CD4-positive, alpha-beta memory T cell (primary cell): ENCODE measurements at regions of chr9 and their contacts with region 1.

Region 1: GRCh38 chr9:96418074-96418809 is at the start of gene ZNF367:
- DNase-seq: peak; percentile 90 to 92 (median 92)
- H3K4me3 ChIP-seq: peak within 1 kb of the TSS; percentile 86 to 89
- H3K4me3 Mint-ChIP-seq: peak within 1 kb of the TSS; percentile 90 to 98 (median 92)
- H3K27ac ChIP-seq: peak within 1 kb of the TSS; percentile 81
- H3K27ac Mint-ChIP-seq: peak within 1 kb of the TSS; percentile 92 to 99 (median 97)
- H3K4me1 ChIP-seq: peaks cover 49% of the 10 kb centered on the region
- H3K4me1 Mint-ChIP-seq: peaks cover 24 to 49% (median 32%) of the 10 kb centered on the region in 4 donors
- H3K27me3 ChIP-seq: no peaks in the 10 kb centered on the region
- H3K27me3 Mint-ChIP-seq: no peaks in the 10 kb centered on the region
- total RNA-seq, gene ZNF367: 5.1 to 5.4 TPM

Region 2: GRCh38 chr9:94726495-94727191 is 1691.6 kb before region 1 on chr9 and contains the start of gene AOPEP:
- CTCF ChIA-PET with region 1: no interaction called
- POLR2A ChIA-PET with region 1: no interaction called
- intact Hi-C with region 1: loop called (anchors 5 kb)
- DNase-seq: peak; percentile 97 to 99 (median 99)
- H3K4me3 ChIP-seq: peak within 1 kb of the TSS; percentile 84 to 98
- H3K4me3 Mint-ChIP-seq: peak within 1 kb of the TSS; percentile 96 to 99 (median 98)
- H3K27ac ChIP-seq: peak within 1 kb of the TSS; percentile 63
- H3K27ac Mint-ChIP-seq: peak within 1 kb of the TSS; percentile 94 to 100 (median 99)
- H3K4me1 ChIP-seq: peaks cover 13% of the 10 kb centered on the region
- H3K4me1 Mint-ChIP-seq: peaks cover 12 to 24% (median 17%) of the 10 kb centered on the region in 4 donors
- H3K27me3 ChIP-seq: no peaks in the 10 kb centered on the region
- H3K27me3 Mint-ChIP-seq: no peaks in the 10 kb centered on the region
- total RNA-seq, gene AOPEP: 11.6 to 11.7 TPM

Region 3: GRCh38 chr9:96327694-96328352 is 90.4 kb before region 1 on chr9:
- CTCF ChIA-PET with region 1: interaction called, 9 read pairs
- POLR2A ChIA-PET with region 1: interaction called, 5 read pairs
- intact Hi-C with region 1: loop called (anchors 1 kb)
- DNase-seq: peak; percentile 46 to 66 (median 54)
- H3K4me3 ChIP-seq: no peak overlapping the region
- H3K4me3 Mint-ChIP-seq: no peak overlapping the region
- H3K27ac ChIP-seq: no peak overlapping the region
- H3K27ac Mint-ChIP-seq: peak overlapping the region in 1 of 7 donors; percentile 29
- H3K4me1 ChIP-seq: no peaks in the 10 kb centered on the region
- H3K4me1 Mint-ChIP-seq: no peaks in the 10 kb centered on the region
- H3K27me3 ChIP-seq: no peaks in the 10 kb centered on the region
- H3K27me3 Mint-ChIP-seq: no peaks in the 10 kb centered on the region

Region 4: DNA sequence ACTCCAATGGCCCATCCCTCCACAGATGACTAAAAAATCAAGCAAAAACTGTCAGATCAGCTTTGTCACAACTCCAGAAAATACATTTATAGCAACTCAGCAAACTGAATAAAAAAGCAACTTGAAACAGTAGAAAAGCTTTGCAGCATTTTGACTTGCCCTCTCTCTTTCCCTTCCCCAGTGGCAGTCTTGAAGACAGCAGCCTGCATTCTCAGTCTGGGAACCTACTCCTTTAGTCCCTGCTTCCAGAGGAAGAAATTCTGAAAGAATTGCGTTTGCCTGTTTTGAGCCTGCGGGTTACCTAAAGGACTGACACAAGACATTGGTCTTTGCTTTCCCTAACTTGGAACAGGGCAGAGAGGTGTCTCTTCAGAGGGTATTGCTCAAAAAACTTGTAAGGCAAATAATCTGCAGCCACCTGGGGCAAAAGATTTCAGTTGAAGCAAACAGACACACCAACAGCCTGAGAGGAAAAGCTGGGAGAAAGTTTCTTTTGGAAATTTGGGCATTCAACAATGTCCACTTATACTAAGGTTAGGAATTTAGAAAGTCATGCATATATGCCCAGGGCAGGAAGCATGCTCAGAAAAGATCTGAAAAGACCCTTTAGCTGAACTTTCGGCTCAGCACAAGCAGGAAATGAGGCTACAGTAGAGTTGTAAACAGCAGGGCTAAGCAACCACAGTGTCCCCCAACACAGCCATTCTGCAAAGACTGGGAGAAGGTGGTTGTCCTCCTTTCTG is 19.5 kb before region 1 on chr9:
- CTCF ChIA-PET with region 1: interaction called, 22 read pairs
- POLR2A ChIA-PET with region 1: interaction called, 47 read pairs
- intact Hi-C with region 1: loop called (anchors 2 kb)
- DNase-seq: peak in 2 of 5 donors; percentile 12 to 15
- H3K4me3 ChIP-seq: no peak overlapping the region
- H3K4me3 Mint-ChIP-seq: peak overlapping the region; percentile 48 to 81 (median 56)
- H3K27ac ChIP-seq: peak overlapping the region; percentile 43
- H3K27ac Mint-ChIP-seq: peak overlapping the region; percentile 74 to 96 (median 82)
- H3K4me1 ChIP-seq: peaks cover 28% of the 10 kb centered on the region
- H3K4me1 Mint-ChIP-seq: peaks cover 20 to 27% (median 23%) of the 10 kb centered on the region in 4 donors
- H3K27me3 ChIP-seq: no peaks in the 10 kb centered on the region
- H3K27me3 Mint-ChIP-seq: no peaks in the 10 kb centered on the region

Region 5: DNA sequence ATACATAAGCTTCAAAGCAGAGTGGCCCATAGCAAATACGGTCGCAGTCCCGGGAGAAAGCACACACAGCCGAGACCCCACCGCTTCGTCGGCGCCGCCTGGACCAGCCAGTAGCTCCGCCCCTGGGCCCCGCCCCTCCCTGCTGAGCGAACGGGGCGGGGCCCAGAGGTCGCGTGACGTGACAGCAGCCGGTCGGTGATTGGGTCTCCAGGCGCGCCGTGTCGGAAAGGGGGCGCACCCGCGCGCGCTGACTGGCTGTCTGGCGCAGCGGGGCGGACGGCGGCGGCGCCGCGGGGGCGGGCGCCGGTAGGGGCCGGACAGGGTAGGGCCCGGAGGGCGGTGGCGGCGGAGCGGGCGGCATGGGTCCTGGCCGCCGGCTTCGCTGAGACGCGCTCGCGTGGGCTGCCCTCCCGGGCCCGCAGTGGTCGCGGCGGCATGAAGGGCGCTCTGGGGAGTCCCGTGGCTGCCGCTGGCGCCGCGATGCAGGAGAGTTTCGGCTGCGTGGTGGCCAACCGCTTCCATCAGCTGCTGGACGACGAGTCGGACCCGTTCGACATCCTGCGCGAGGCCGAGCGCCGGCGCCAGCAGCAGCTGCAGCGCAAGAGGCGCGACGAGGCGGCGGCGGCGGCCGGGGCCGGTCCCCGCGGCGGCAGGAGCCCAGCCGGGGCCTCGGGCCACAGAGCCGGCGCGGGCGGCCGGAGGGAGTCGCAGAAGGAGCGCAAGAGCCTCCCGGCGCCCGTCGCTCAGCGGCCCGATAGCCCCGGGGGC is 31.8 kb after region 1 on chr9 and contains the start of gene HABP4:
- CTCF ChIA-PET with region 1: interaction called, 7 read pairs
- POLR2A ChIA-PET with region 1: interaction called, 123 read pairs
- intact Hi-C with region 1: loop called (anchors 1 kb)
- DNase-seq: peak; percentile 93 to 94 (median 94)
- H3K4me3 ChIP-seq: peak within 1 kb of the TSS; percentile 48 to 72
- H3K4me3 Mint-ChIP-seq: peak within 1 kb of the TSS; percentile 91 to 96 (median 96)
- H3K27ac ChIP-seq: peak within 1 kb of the TSS; percentile 59
- H3K27ac Mint-ChIP-seq: peak within 1 kb of the TSS; percentile 82 to 98 (median 94)
- H3K4me1 ChIP-seq: peaks cover 23% of the 10 kb centered on the region
- H3K4me1 Mint-ChIP-seq: peaks cover 16 to 32% (median 21%) of the 10 kb centered on the region in 4 donors
- H3K27me3 ChIP-seq: no peaks in the 10 kb centered on the region
- H3K27me3 Mint-ChIP-seq: no peaks in the 10 kb centered on the region
- total RNA-seq, gene HABP4: 35.5 to 36.6 TPM

Region 6: GRCh38 chr9:96619491-96620154 is 201.4 kb after region 1 on chr9 and contains the start of gene CDC14B:
- CTCF ChIA-PET with region 1: no interaction called
- POLR2A ChIA-PET with region 1: no interaction called
- intact Hi-C with region 1: loop called (anchors 2 kb)
- DNase-seq: peak; percentile 51 to 77 (median 62)
- H3K4me3 ChIP-seq: peak within 1 kb of the TSS in 1 of 2 donors; percentile 38
- H3K4me3 Mint-ChIP-seq: peak within 1 kb of the TSS; percentile 62 to 83 (median 80)
- H3K27ac ChIP-seq: no peak within 1 kb of the TSS
- H3K27ac Mint-ChIP-seq: peak within 1 kb of the TSS in 4 of 7 donors; percentile 37 to 63 (median 44)
- H3K4me1 ChIP-seq: peaks cover 9% of the 10 kb centered on the region
- H3K4me1 Mint-ChIP-seq: peaks cover 4 to 6% (median 6%) of the 10 kb centered on the region in 4 donors
- H3K27me3 ChIP-seq: peaks cover 8% of the 10 kb centered on the region
- H3K27me3 Mint-ChIP-seq: peaks cover 20 to 31% of the 10 kb centered on the region in 2 donors
- total RNA-seq, gene CDC14B: 15.8 to 17.1 TPM

Region 7: DNA sequence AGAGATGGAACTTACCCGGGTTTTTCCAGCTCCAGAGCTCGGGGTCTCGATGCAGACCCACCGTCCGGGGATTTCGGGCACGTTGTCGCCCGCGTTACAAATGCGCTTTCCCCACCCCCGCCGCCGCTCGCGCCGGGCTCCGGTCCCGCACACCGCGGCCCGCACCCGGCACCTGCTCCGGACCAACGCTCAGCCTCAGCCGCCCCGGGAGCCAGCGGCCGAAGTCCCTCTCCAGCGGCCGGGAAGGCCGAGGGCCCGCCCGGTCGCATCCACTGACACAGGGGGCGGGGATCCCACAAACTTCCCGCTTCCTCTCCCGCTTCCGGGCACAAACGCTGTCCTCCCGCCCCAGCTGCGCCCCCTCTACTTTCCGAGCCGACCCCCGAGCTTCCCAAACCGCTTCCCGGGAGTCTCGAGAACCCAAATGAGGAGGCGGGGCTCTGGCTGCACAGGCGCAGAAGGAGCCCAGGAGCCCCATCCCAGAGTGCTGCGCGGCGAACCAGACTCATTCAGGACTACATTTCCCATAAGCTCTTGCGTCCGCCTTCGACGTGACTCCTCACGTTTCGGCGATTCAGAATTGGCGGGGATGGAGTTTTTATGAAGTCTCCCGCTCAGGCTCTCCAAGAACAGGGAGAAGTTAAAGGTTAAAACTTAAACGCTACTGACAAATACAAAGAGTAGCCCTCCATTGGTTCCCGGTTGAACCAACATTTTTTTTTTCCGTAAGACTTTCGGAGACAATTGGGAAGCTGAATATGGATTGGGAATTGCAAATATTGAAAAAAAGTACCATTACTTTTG is 436.0 kb after region 1 on chr9 and contains the start of gene ZNF782:
- CTCF ChIA-PET with region 1: no interaction called
- POLR2A ChIA-PET with region 1: no interaction called
- intact Hi-C with region 1: loop called (anchors 10 kb)
- DNase-seq: peak; percentile 80 to 84 (median 81)
- H3K4me3 ChIP-seq: peak within 1 kb of the TSS; percentile 4 to 84
- H3K4me3 Mint-ChIP-seq: peak within 1 kb of the TSS; percentile 100
- H3K27ac ChIP-seq: peak within 1 kb of the TSS; percentile 73
- H3K27ac Mint-ChIP-seq: peak within 1 kb of the TSS; percentile 86 to 100 (median 99)
- H3K4me1 ChIP-seq: peaks cover 32% of the 10 kb centered on the region
- H3K4me1 Mint-ChIP-seq: peaks cover 26 to 53% (median 34%) of the 10 kb centered on the region in 4 donors
- H3K27me3 ChIP-seq: no peaks in the 10 kb centered on the region
- H3K27me3 Mint-ChIP-seq: peaks cover 3% of the 10 kb centered on the region in 2 donors
- total RNA-seq, gene ZNF782: 14.2 to 14.7 TPM